ENCODE measurements at regions of chr16 and their contacts with region 1.

Region 1: DNA sequence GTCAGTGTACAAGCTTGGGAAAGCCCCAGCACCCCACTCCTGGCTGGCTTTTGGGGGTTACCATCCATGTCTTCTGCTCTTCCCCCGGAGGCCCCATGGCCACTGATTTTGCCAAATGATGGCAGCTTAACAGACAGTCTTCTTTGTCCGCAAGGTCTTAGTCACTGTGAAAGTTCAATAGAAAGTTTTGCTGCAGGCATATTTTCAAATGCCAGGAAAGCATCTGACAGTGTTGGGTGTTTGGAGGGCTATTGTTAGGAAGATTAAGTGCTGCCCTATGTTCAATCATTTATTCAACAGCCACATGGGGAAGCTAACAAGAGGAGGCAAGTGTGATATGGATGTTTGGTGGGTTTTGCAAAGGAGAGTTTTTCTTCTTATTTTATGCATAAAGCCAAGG is 122.4 kb downstream of the TOX3 start:
- DNase-seq: no peak
- CTCF ChIP-seq: no peak

Region 2: DNA sequence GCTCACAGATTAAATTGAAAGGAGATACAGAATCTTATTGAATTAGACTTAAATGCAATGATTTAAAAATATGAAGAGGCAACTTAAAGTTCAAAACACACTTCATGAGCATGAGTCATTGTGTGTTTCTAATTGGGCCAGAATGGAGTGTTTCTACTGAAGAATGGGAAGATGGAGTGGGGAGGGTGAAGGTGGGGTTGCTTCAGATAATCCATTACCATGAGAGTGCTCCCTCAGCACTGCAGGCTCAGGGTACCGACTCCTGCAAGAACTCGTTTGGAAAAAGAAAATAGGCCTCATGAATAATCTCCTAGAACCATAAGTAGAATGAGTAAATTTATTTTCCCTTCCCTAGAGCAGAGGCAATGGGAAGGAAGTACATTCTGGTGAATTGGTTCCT is 250.4 kb before region 1 on chr16:
- CTCF ChIA-PET with region 1: no interaction called
- POLR2A ChIA-PET with region 1: no interaction called
- DNase-seq: no peak
- CTCF ChIP-seq: no peak

Region 3: DNA sequence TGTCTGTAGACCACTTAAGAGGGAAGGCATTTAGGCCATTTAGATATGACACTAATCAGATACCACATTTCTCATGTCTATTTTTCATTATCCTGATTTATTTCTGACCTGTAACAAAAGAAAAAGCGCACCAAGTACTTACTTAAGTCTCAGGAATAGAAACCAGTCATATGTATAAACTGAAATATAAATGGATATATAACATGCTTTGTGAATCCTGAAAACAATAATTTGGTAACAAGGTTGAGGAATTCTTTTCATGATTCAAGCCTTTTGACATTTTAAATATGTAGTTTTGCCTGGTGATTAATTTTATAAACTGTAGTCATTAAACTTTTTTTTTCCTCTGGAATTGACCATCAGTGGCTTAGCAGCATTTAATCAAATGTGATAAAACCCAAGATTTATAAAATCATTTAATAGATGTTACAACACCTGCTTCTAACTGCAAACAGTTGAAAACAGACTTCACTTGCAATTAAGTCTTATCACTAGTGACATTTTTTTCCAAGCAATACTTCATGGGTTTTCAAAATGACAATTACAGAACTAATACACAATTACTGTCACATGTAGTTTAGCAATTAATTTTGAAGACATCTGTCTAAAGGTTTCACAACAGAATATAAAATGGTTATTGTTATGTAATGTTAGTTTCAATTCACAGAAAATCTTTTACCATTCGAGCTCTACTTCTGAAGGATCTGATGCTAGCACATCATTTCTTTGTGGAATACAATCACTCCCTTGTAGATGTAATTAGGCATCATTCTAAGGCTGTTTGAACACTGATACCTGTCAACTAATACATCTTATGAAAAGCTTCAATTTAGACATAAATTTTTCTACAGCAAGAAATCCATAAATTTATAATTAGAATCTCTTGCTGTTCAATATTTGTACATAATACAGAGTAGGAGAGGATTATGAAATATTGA is 12.0 kb after region 1 on chr16:
- CTCF ChIA-PET with region 1: interaction called, 13 read pairs
- POLR2A ChIA-PET with region 1: no interaction called
- DNase-seq: no peak
- CTCF ChIP-seq: no peak

Measured in GM10248 (cell line).